ENCODE measurements at regions of chr19 and their contacts with region 1.

Region 1: DNA sequence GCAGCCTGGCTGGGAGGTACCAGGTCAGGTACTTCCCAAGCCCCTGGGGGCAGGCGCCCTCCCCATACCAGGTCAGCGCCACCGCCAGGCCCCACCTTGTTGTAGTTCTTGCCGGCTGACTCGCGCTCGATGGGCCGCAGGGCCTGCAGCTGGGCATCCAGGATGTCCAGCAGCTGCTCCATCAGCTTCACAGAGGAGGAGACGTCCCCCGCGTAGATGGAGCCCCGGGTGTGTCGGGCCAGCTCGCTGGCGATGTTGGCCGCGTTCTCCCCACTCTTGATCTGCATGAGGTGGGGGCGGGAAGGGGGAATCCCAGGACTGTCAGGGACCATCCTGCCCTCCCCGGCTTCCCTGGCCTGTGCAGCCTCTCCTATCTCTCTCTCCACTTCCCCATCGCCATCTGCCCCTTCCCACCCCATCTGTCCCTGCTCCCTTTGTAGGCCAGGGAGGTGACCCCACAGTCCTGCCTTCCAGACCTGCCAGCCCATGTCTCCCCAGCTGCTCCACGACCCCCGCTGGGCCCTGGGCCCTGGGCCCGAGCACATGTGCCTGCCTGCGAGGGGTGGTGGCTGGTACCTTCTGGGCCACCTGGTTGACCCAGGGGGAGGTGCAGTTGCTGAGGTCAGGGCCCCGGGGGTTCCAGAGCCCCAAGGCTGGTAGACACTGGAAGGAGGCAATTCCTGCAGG is 23.8 kb upstream of the ASF1B start:
- DNase-seq: no peak
- ATAC-seq: no peak
- H3K4me3 ChIP-seq: no peak overlapping the region
- H3K27ac ChIP-seq: no peak overlapping the region
- H3K4me1 ChIP-seq: no peaks in the 10 kb centered on the region
- CTCF ChIP-seq: no peak
- EP300 ChIP-seq: no peak
- POLR2A ChIP-seq: no peak
- RAD21 ChIP-seq: no peak

Region 2: GRCh38 chr19:14091081-14091812 is 68.9 kb before region 1 on chr19:
- CTCF ChIA-PET with region 1: no interaction called
- POLR2A ChIA-PET with region 1: no interaction called
- DNase-seq: peak; percentile 62 to 67
- ATAC-seq: peak; percentile 73 to 89
- H3K4me3 ChIP-seq: peak overlapping the region; percentile 87
- H3K27ac ChIP-seq: peak overlapping the region; percentile 99
- H3K4me1 ChIP-seq: 0 out of 3 replicates have a peak, but pooled peaks cover 4% of the 10 kb centered on the region
- CTCF ChIP-seq: peak; percentile 40; the same call in 2 of the 3 replicates
- EP300 ChIP-seq: no peak
- POLR2A ChIP-seq: peak; percentile 68
- RAD21 ChIP-seq: no peak

Region 3: DNA sequence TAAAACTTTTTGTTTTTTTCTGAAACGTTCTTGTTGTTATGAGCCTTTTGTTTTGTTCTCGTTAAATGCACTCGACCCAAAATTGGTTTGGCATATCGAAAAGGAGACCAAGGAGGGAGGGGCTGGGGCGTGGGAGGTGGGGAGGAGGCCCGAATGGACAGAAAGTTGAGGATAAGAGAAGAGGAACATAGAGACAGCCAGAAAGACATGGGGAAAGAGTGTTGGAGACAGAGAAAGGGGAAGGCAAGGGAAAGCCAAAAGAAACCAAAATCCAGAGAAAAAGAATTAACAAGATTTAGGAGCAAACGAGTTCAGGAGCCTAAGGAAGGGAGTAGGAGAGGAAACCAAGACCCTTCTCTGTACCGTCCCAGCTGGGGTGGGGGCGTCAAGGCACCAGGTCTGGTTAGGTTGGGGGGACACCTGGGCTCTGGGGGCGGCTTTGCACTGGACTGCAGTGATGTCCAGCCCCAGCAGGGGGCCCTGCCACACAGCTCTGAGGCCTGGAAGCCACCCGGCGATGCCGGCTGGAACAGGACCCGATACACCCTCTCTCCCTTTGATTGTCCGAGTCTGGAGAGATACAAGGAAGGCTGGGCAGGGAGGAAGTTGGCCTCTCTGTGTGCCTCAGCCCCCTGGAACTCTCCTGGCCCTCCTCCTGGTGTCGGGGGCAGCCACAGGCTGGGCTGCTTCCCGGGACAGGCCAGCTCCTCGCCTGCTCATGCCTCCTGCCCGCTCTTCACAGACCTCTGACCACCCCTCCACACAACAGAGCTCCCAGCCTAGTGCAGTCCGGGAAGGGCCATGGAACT is 12.2 kb before region 1 on chr19:
- CTCF ChIA-PET with region 1: interaction called, 10 read pairs
- POLR2A ChIA-PET with region 1: no interaction called
- DNase-seq: peak; percentile 45 to 73
- ATAC-seq: peak; percentile 86 to 95
- H3K4me3 ChIP-seq: no peak overlapping the region
- H3K27ac ChIP-seq: peak overlapping the region in 1 of 2 experiments; percentile 57; a peak in 2 of 6 replicates
- H3K4me1 ChIP-seq: no peaks in the 10 kb centered on the region
- CTCF ChIP-seq: peak; percentile 49; the same call in 2 of the 3 replicates
- EP300 ChIP-seq: no peak
- POLR2A ChIP-seq: no peak
- RAD21 ChIP-seq: peak; percentile 53 to 58

Measured in A549 (cell line).